A549 (cell line): ENCODE measurements at regions of chr20 and their contacts with region 1.

Region 1: DNA sequence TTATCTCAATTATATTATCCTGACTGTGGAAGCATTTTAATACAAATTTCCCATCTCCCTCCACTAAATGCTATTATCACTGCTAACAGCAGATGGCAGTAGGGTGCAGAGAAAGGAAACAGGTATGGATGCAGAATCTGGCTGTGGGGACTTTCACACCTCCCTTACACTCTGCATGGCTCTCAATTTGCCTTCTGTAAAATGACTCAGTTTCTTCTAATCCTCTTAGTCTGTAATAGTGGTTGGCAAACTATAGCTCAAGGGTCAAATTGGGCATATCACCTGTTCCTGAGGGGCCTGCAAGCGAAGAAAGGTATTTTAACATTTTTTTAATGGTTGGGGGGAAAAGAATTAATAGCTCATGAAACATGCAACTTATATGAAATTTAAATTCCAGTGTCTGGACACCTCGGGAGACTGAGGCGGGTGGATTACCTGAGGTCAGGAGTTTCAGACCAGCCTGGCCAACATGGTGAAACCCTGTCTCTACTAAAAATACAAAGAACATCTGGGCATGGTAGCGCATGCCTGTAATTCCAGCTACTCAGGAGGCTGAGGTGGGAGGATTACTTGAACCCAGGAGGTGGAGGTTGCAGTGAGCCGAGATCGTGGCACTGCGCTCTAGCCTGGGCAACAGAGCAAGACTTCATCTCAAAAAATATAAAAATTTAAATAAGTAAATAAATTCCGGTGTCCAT is 83.5 kb downstream of the ZMYND8 start:
- DNase-seq: peak; percentile 67 to 77
- ATAC-seq: peak; percentile 63 to 68; a peak in 4 of 6 replicates
- H3K4me3 ChIP-seq: no peak overlapping the region
- H3K27ac ChIP-seq: peak overlapping the region; percentile 84 to 93
- H3K4me1 ChIP-seq: peaks cover 61% of the 10 kb centered on the region
- CTCF ChIP-seq: peak; percentile 95
- EP300 ChIP-seq: no peak
- POLR2A ChIP-seq: no peak
- RAD21 ChIP-seq: peak; percentile 98 to 99

Region 2: DNA sequence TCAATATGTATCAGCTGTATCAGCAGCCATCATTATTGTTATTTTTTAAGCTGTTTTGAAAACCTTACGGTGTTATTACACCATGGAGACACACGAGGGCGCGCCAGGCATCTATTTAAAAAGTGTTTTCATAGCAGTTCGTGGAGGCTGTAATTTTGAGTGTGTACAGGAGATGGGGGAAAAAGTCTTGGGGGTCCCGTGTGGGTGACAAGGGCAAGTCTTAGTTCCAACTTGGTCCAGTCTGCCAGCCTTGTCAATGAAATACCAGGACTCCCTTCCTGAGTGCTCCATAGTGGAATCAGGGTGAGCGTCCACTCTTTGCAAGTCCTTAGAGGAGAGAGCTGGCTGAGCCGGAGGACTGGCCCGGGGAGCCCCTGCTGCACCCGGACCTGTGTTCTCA is 520.3 kb before region 1 on chr20:
- CTCF ChIA-PET with region 1: interaction called, 23 read pairs
- POLR2A ChIA-PET with region 1: no interaction called
- DNase-seq: peak; percentile 33 to 69
- ATAC-seq: peak; percentile 54 to 69; a peak in 4 of 6 replicates
- H3K4me3 ChIP-seq: no peak overlapping the region
- H3K27ac ChIP-seq: peak overlapping the region; percentile 29 to 44; a peak in 5 of 6 replicates
- H3K4me1 ChIP-seq: peaks cover 5% of the 10 kb centered on the region; the same call in 2 of the 3 replicates
- CTCF ChIP-seq: peak; percentile 84
- EP300 ChIP-seq: no peak
- POLR2A ChIP-seq: no peak
- RAD21 ChIP-seq: peak; percentile 85 to 89

Region 3: DNA sequence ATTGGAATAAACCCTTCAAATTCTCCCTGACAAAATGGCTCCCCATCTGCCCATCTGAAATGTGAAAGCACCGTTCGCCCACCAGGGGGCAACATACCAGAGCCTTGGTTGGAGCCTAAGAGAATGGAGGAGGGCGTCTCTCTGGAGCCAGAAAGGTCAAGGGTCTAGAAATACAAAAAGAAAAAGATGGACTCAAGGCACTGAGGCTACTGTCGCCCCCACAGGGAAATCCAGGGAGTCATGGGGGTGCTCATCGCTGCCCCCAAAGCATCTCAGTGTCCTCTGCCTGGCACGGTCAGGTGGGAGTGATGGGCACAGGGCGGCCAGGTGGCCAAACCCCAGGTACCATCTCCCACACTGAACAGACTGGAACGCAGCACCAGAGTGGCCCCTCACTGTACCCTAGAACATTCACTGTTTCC is 52.9 kb before region 1 on chr20:
- CTCF ChIA-PET with region 1: interaction called, 13 read pairs
- POLR2A ChIA-PET with region 1: no interaction called
- DNase-seq: peak; percentile 49 to 53
- ATAC-seq: peak in 1 of 2 experiments; percentile 79; a peak in 3 of 6 replicates
- H3K4me3 ChIP-seq: no peak overlapping the region
- H3K27ac ChIP-seq: no peak overlapping the region
- H3K4me1 ChIP-seq: no peaks in the 10 kb centered on the region
- CTCF ChIP-seq: peak; percentile 52
- EP300 ChIP-seq: no peak
- POLR2A ChIP-seq: no peak
- RAD21 ChIP-seq: peak; percentile 24 to 43; a peak in 2 of 5 replicates

Region 4: DNA sequence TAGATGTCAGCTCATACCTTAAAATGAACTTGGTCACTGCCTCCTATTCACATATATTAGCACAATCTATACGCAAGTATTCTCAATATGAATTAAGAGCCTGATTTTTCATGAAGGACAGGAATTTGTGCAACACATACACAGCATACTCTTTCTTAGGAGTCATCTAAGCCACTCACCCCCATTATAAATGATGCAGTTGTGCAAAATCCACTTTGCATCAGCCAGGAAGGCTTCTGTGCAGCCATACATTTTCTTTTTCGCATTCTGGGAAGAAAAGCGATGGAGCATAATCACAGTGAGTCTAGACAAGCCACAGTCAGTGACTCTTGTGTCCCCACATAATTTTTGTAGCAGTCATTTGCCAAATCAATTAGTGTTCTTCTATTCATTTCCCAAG is 17.0 kb after region 1 on chr20:
- CTCF ChIA-PET with region 1: interaction called, 24 read pairs
- POLR2A ChIA-PET with region 1: interaction called, 12 read pairs
- DNase-seq: no peak
- ATAC-seq: no peak
- H3K4me3 ChIP-seq: no peak overlapping the region
- H3K27ac ChIP-seq: peak overlapping the region in 1 of 2 experiments; percentile 19; a peak in 2 of 6 replicates
- H3K4me1 ChIP-seq: peaks cover 4% of the 10 kb centered on the region; the same call in 2 of the 3 replicates
- CTCF ChIP-seq: no peak
- EP300 ChIP-seq: no peak
- POLR2A ChIP-seq: no peak
- RAD21 ChIP-seq: no peak

Region 5: GRCh38 chr20:47334022-47334551 is 61.0 kb after region 1 on chr20:
- CTCF ChIA-PET with region 1: interaction called, 74 read pairs
- POLR2A ChIA-PET with region 1: interaction called, 3 read pairs
- DNase-seq: peak; percentile 77 to 91
- ATAC-seq: peak; percentile 90 to 94
- H3K4me3 ChIP-seq: peak overlapping the region; percentile 34
- H3K27ac ChIP-seq: peak overlapping the region; percentile 94 to 97
- H3K4me1 ChIP-seq: peaks cover 70% of the 10 kb centered on the region
- CTCF ChIP-seq: no peak
- EP300 ChIP-seq: peak; percentile 79 to 93; a peak in 3 of 5 replicates
- POLR2A ChIP-seq: no peak
- RAD21 ChIP-seq: peak; percentile 20 to 54; a peak in 4 of 5 replicates

Region 6: DNA sequence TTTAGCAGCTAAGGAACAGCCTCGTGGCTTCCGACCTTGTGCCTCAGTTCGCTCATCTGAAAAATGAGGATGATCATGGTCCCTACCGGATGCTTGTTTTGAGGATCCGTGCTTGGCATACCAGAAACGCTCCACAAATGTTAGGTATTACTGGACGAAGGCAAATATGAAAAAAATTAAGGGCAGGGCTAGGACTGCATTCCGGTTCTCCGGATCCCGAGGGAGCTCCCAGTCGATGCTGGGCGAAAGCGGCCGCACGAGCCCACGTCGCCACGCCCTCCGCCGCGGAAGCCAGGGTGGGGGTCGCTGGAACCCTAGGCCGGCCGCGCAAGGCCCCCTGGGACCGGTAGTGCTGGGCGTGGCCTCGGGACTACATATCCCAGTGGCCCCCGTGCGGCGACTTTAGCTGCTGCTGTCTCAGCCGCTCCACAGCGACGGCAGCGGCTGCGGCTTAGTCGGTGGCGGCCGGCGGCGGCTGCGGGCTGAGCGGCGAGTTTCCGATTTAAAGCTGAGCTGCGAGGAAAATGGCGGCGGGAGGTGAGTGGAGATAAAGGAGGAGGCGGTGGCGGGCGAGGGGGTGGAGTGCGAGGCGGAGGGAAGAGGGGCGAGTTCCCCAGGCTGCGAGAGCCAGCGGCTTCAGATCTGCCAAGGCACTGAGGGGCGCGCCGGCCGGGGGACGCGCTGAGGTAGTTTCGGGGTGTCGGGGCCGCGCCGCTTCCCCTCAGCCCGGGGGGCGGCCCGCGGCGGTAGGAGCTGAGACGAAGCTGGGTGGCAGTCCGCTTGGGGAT is 228.6 kb after region 1 on chr20 and contains the start of gene NCOA3:
- CTCF ChIA-PET with region 1: interaction called, 11 read pairs
- POLR2A ChIA-PET with region 1: interaction called, 8 read pairs
- DNase-seq: peak; percentile 95 to 96
- ATAC-seq: peak; percentile 94 to 98
- H3K4me3 ChIP-seq: peak within 1 kb of the TSS; percentile 67
- H3K27ac ChIP-seq: peak within 1 kb of the TSS; percentile 91 to 98
- H3K4me1 ChIP-seq: peaks cover 33% of the 10 kb centered on the region
- CTCF ChIP-seq: no peak; the same call in 2 of the 3 replicates
- EP300 ChIP-seq: no peak; a peak in 1 of 5 replicates
- POLR2A ChIP-seq: peak; percentile 91
- RAD21 ChIP-seq: peak; percentile 28 to 60; a peak in 4 of 5 replicates
- polyA plus RNA-seq, gene NCOA3: 135 and 136 TPM in 2 replicates

Region 7: GRCh38 chr20:47704755-47705493 is 431.9 kb after region 1 on chr20:
- CTCF ChIA-PET with region 1: no interaction called
- POLR2A ChIA-PET with region 1: no interaction called
- DNase-seq: no peak
- ATAC-seq: peak; percentile 37 to 56; a peak in 2 of 6 replicates
- H3K4me3 ChIP-seq: no peak overlapping the region
- H3K27ac ChIP-seq: no peak overlapping the region; a peak in 1 of 6 replicates
- H3K4me1 ChIP-seq: 0 out of 3 replicates have a peak, but pooled peaks cover 6% of the 10 kb centered on the region
- CTCF ChIP-seq: no peak
- EP300 ChIP-seq: no peak
- POLR2A ChIP-seq: no peak
- RAD21 ChIP-seq: no peak